ENCODE measurements at regions of chr2 and their contacts with region 1.

Region 1: GRCh38 chr2:31333527-31334183 is 80.9 kb downstream of the XDH start:
- DNase-seq: peak; percentile 75
- CTCF ChIP-seq: peak; percentile 95

Region 2: DNA sequence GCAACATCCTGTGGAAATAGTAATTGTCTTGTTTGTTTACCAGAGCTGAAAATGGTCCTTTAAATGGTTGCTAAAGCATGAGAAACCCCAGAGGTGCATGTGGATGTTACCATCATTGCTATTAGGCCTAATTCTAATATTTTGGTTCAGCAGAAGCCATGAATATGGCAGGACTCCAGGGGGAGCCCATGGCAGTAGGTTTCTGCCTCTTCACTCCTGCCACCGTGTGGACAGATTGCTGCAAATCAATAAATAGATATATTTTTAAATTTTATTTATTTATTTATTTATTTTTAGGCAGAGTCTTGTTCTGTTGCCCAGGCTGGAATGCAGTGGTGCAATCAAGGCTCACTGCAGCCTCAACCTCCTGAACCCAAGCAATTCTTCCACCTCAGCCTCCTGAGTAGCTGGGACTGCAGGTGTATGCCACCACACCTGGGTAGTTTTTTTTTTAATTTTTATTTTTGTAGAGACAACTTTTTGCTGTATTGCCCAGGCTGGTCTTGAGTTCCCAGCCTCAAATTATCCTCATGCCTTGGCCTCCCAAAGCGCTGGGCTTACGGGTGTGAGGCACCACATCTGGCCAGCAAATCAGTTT is 471.5 kb before region 1 on chr2:
- in situ Hi-C with region 1: loop called (anchors 25 kb)
- DNase-seq: peak; percentile 62
- CTCF ChIP-seq: peak; percentile 69

Region 3: DNA sequence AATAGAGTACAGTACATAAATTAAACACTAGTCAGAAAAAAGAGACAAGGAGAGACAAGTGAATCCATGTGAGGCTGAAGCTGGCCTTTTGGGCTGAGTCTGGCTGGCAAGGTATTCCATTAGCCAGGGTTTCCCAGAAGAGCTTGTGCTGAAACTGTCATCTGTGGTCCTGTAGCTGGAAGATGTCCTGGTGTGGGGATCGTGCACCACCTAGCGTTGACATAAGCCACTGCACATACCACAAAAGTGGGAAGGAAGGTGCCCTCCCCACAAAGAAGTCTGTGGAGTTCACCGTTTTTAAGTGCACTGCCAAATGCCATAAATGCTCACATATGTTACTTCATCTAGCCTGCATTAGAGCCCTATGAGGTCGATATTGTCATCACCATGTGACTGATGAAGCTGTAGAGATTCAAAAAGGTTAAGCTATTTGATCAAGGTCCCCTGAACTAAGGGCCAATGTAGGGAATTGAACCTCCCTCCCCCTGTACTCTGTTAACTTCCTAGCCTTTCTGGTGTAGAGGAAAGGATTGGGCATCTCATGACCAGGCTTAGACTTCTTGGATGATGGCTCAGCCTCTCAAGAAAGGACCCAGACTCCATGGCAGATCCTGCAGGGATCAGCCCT is 163.5 kb before region 1 on chr2:
- in situ Hi-C with region 1: loop called (anchors 10 kb)
- DNase-seq: peak; percentile 75
- CTCF ChIP-seq: peak; percentile 88

Region 4: DNA sequence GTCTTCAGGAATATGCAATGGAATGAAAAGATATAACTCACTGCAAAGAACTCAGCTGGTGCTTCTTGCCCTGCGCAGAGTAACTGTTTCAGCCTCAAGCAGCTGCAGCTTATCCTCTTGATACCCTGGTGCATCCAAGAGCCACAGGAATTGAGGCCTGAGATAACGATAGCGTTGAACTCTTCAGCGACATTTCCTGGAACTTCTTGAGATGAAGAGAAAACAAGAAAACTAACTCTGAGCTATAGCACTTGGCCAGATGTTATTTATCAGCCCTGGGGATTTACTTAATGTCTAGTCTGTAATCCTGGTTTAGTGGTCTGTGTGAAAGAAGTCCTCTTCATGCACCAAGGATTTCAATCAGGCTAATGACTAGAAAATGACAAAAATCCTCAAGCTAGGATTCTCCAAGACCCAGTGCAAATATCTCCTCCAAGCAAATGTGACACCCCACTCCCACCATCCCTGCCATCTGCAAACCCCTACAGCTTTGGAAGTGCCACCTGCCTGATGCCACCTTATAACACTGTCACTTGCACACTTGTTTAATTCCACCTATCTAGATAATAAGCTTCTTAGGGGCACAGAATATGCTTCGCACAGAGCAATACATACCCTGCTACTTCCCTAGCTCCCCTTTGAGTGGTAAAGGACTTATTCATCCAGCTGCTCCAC is 59.1 kb before region 1 on chr2:
- in situ Hi-C with region 1: no loop called
- DNase-seq: no peak
- CTCF ChIP-seq: no peak